T-cell (primary cell): ENCODE measurements at regions of chr11 and their contacts with region 1.

Region 1: GRCh38 chr11:118592616-118593367 is 14.6 kb upstream of the PHLDB1 start:
- DNase-seq: no peak
- ATAC-seq: no peak
- H3K4me3 ChIP-seq: no peak overlapping the region
- H3K4me3 Mint-ChIP-seq: no peak overlapping the region
- H3K27ac ChIP-seq: no peak overlapping the region
- H3K27ac Mint-ChIP-seq: no peak overlapping the region
- H3K4me1 ChIP-seq: peaks cover 0 to 4% of the 10 kb centered on the region in 2 experiments
- H3K4me1 Mint-ChIP-seq: peaks cover 16 to 22% (median 20%) of the 10 kb centered on the region in 3 donors
- H3K27me3 ChIP-seq: no peaks in the 10 kb centered on the region
- H3K27me3 Mint-ChIP-seq: no peaks in the 10 kb centered on the region

Region 2: DNA sequence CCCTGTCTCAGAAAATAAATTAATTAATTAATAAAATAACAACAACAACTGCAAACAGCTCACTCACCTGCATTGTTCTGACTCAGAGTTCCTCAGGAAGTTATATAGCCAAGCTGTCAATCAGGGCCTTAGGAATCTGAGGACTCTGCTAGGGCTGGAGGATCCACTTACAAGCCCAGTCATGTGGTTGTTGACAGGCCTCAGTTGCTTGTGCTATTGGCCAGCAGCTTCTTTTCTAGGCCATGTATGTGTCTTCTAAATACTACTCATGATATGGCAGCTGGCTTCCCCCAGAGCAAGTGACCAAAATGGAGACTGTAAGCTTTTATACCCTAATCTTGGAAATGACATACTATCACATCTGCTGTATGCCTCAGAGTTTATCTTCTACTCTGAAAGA is 212.2 kb before region 1 on chr11:
- CTCF ChIA-PET with region 1: no interaction called
- POLR2A ChIA-PET with region 1: interaction called in 1 of 2 experiments, 10 read pairs
- DNase-seq: no peak
- ATAC-seq: no peak
- H3K4me3 ChIP-seq: no peak overlapping the region
- H3K4me3 Mint-ChIP-seq: no peak overlapping the region
- H3K27ac ChIP-seq: no peak overlapping the region
- H3K27ac Mint-ChIP-seq: peak overlapping the region in 1 of 2 donors; percentile 28
- H3K4me1 ChIP-seq: no peaks in the 10 kb centered on the region
- H3K4me1 Mint-ChIP-seq: no peaks in the 10 kb centered on the region
- H3K27me3 ChIP-seq: no peaks in the 10 kb centered on the region
- H3K27me3 Mint-ChIP-seq: no peaks in the 10 kb centered on the region

Region 3: DNA sequence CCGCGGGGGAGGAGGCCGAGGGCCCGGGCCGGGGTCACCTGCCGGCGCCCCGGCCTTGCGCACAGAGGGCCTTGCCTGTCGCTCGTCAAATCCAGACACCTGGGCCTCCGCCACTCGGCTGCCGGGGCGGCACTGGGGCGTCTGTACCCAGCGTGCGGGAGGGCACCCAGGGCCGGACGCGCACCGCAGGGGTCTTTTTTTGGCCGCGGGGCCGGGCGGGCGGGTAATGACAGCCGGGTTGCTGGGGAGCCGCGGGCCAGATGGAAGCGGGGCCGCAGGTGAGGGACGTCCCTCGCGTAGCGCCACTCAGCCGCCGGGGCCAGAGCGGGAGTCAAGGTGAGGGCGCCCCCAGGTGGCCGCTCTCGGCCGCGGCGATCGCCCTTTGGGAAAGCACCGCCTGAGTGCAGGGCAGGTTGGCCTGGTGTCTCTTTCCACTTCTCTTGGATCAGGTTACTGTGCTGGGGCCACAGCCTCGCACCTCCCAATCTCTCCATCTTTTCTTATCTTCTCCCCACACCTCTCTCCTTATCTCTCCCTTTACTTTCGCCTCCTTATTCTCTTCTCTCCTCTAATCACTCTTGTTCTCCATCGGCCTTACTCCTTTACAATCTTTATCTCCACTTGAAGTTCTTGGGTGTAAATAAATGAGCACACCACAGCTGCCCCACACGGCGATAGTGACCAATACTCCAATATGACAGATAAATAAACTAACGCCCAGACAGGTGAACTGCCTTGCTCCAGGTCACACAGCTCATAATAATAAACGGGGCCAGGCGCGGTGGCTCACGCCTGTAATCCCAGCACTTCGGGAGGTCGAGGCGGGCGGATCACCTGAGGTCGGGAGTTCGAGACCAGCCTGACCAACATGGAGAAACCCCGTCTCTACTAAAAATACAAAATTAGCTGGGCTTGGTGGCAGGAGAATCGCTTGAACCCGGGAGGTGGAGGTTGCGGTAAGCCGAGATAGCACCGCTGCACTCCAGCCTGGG is 18.3 kb after region 1 on chr11:
- CTCF ChIA-PET with region 1: interaction called, 9 to 31 read pairs
- POLR2A ChIA-PET with region 1: interaction called, 3 to 4 read pairs
- DNase-seq: peak; percentile 57 to 92 (median 78)
- ATAC-seq: peak; percentile 51 to 63 (median 54)
- H3K4me3 ChIP-seq: peak overlapping the region; percentile 46 to 49
- H3K4me3 Mint-ChIP-seq: peak overlapping the region; percentile 61 to 84 (median 68)
- H3K27ac ChIP-seq: no peak overlapping the region
- H3K27ac Mint-ChIP-seq: no peak overlapping the region
- H3K4me1 ChIP-seq: peaks cover 14 to 41% of the 10 kb centered on the region in 2 experiments
- H3K4me1 Mint-ChIP-seq: peaks cover 20 to 31% (median 25%) of the 10 kb centered on the region in 3 donors
- H3K27me3 ChIP-seq: peaks cover 3 to 41% of the 10 kb centered on the region in 2 experiments
- H3K27me3 Mint-ChIP-seq: peaks cover 0 to 18% of the 10 kb centered on the region in 2 donors